PC-9 (cell line): ENCODE measurements at regions of chr4 and their contacts with region 1.

Region 1: DNA sequence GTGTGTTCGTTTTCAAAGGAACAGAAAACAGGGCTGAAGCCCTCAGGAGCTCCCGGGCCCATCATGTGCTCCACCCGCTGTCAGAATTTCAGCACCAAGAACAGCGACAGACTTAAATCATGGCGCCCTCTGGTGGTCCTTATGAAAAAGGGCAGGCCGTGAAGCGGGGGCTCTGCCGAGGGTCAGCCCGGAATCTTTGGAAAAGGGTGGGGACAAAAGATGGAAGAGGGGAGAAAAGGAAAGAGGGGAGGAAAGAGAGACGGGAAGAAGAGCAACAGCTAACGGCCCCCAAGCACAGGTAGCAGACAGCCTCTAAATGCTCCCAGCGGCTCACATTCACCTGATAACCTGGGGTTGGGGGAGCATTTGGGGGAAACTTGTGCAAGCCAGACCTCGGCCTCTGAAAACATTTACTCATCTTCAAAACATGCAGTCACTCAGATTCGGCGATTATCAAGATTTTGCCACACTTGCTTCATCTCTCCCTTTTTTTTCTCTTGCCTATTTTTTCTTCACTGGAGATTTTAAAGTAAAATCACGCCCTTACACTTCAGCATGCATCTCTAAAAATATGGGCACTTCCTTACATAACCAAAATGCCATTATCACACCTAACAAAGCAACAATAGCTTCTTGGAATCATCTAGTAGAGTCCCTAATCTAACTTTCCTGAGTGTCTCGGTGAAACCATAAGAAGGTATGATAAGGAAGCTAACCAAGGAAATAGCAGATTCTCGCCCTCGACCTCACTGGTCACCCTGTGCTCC is 28.1 kb upstream of the MAN2B2 start:
- DNase-seq: peak; percentile 37
- H3K4me3 ChIP-seq: no peak overlapping the region
- H3K27ac ChIP-seq: no peak overlapping the region
- H3K4me1 ChIP-seq: no peaks in the 10 kb centered on the region
- H3K27me3 ChIP-seq: no peaks in the 10 kb centered on the region
- CTCF ChIP-seq: peak; percentile 94

Region 2: GRCh38 chr4:6327041-6327917 is 219.6 kb before region 1 on chr4:
- CTCF ChIA-PET with region 1: no interaction called
- POLR2A ChIA-PET with region 1: no interaction called
- intact Hi-C with region 1: loop called (anchors 1 kb)
- DNase-seq: peak in 1 of 2 experiments; percentile 80
- H3K4me3 ChIP-seq: no peak overlapping the region
- H3K27ac ChIP-seq: no peak overlapping the region
- H3K4me1 ChIP-seq: 0 out of 2 replicates have a peak, but pooled peaks cover 3% of the 10 kb centered on the region
- H3K27me3 ChIP-seq: no peaks in the 10 kb centered on the region
- CTCF ChIP-seq: peak; percentile 84

Region 3: DNA sequence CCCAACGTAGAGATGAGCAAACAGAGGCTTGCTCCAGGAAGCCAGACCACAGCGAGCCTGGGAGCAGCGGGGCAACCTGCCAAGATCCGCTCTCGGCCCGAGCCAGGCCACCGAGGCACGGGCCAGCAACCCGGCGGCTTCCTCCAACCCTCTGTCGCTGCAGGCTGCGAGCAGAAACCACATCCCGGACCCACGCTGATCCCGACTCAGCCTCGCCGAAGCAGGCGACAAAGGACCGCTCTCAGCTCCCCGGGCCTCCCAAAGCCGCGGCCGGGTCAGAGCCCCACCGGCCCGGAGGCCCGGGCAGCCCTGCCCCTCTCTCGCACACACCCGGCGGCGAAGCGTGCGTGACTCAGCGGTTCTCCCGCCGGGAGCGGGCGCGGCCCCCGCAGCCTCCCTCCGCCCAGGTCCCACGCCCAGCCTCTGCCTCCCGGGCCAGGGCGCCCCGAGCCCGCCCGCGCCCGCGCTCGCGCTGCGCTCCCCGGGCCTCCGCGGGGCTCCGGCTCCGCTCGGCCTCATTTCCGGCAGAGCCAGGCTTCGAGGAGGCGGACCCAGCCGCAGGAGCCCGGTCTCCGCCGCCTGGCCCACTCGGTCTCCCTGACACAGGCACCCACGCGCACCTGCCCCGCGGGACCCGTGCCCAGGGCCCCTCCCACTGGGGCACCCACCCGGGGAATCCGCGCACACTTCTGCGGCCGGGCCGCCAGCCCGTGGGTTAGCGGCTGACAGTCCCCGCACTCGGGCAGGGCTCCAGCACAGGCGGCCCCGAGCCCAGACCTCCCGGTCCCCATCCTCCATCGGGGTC is 76.2 kb before region 1 on chr4:
- CTCF ChIA-PET with region 1: interaction called, 11 read pairs
- POLR2A ChIA-PET with region 1: no interaction called
- intact Hi-C with region 1: loop called (anchors 5 kb)
- DNase-seq: peak; percentile 45 to 74
- H3K4me3 ChIP-seq: peak overlapping the region; percentile 69
- H3K27ac ChIP-seq: peak overlapping the region; percentile 69
- H3K4me1 ChIP-seq: no peaks in the 10 kb centered on the region
- H3K27me3 ChIP-seq: no peaks in the 10 kb centered on the region
- CTCF ChIP-seq: no peak

Region 4: DNA sequence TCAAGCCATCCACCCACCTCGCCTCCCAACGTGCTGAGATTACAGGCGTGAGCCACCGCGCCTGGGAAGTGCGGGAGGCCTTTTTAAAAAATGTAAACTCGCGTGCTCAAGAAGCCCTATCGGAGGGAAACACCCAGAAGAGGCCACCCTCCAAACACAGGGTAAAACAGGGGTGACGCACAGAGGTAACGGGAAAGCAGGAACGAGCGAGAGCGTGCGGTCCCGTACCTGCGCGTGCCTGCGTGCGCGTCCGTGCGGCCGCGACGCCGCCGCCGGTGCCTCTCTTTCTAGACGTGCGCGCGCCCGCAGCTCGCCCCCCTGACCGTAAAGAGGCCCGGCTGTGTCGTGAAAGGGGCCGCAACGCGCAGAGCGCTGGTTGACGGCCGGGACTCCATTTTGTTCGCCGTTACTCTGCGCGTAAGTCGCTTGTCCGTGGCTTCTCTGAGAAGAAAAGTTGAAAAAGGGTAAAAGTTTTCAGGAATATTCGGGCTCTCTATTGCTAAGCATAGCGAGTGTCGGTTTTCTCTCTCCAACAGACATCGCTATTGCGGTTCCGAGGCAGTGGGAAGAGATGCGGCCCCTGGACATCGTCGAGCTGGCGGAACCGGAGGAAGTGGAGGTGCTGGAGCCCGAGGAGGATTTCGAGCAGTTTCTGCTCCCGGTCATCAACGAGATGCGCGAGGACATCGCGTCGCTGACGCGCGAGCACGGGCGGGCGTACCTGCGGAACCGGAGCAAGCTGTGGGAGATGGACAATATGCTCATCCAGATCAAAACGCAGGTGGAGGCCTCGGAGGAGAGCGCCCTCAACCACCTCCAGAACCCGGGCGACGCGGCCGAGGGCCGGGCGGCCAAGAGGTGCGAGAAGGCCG is 93.7 kb after region 1 on chr4 and contains the start of gene MRFAP1:
- CTCF ChIA-PET with region 1: no interaction called
- POLR2A ChIA-PET with region 1: no interaction called
- intact Hi-C with region 1: loop called (anchors 5 kb)
- DNase-seq: peak; percentile 83 to 91
- H3K4me3 ChIP-seq: peak within 1 kb of the TSS; percentile 78
- H3K27ac ChIP-seq: peak within 1 kb of the TSS; percentile 80
- H3K4me1 ChIP-seq: peaks cover 12% of the 10 kb centered on the region
- H3K27me3 ChIP-seq: no peaks in the 10 kb centered on the region
- CTCF ChIP-seq: no peak
- total RNA-seq, gene MRFAP1: 278 and 291 TPM in 2 replicates

Region 5: DNA sequence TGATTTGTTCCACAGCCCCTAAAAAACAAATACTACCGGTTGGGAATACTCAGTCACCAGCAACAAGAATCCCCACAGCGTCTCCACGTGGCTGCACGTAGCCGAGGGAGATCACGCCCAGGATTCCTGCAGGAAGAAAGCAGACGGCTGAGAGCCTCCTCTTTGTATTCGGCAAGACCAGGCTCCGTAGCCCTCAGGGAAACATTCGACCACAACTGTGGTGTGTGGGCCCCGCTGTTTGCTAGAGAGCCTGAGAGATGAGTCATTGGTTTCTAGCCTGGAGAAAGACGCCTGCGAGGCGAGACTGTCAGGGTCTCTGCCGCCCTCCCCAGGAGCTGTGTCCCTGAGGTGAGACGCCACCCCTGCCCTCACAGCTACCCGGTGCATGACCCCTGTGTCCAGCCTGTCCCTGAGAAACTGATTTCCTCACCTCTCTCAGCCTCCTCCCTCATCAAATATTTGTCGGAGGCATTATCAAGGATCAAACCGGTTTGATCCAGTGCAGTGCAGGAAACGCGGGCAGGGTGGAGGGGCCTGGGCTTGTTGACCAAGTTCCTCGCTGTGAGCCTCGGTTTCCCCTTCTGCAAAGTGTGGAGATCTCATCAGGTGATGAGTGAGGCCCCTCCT is 142.1 kb after region 1 on chr4:
- CTCF ChIA-PET with region 1: no interaction called
- POLR2A ChIA-PET with region 1: interaction called, 3 read pairs
- intact Hi-C with region 1: loop called (anchors 1 kb)
- DNase-seq: peak; percentile 94 to 98
- H3K4me3 ChIP-seq: peak overlapping the region; percentile 46; the same call in 1 of the 2 replicates
- H3K27ac ChIP-seq: peak overlapping the region; percentile 100
- H3K4me1 ChIP-seq: peaks cover 56% of the 10 kb centered on the region
- H3K27me3 ChIP-seq: no peaks in the 10 kb centered on the region
- CTCF ChIP-seq: no peak

Region 6: GRCh38 chr4:7081891-7082471 is 535.1 kb after region 1 on chr4:
- CTCF ChIA-PET with region 1: no interaction called
- POLR2A ChIA-PET with region 1: no interaction called
- intact Hi-C with region 1: loop called (anchors 2 kb)
- DNase-seq: peak; percentile 62 to 73
- H3K4me3 ChIP-seq: no peak overlapping the region
- H3K27ac ChIP-seq: no peak overlapping the region
- H3K4me1 ChIP-seq: no peaks in the 10 kb centered on the region
- H3K27me3 ChIP-seq: no peaks in the 10 kb centered on the region
- CTCF ChIP-seq: peak; percentile 66